Left lung (tissue), 14 donors: ENCODE measurements at regions of chr19 and their contacts with region 1.

Region 1: GRCh38 chr19:47779524-47780214 is 1.2 kb downstream of the SELENOW start:
- DNase-seq: peak in 1 of 4 donors; percentile 60
- ATAC-seq: peak; percentile 25
- H3K4me3 ChIP-seq: peak overlapping the region; percentile 74 to 92
- H3K27ac ChIP-seq: peak overlapping the region; percentile 94 to 98
- H3K4me1 ChIP-seq: peaks cover 29 to 31% of the 10 kb centered on the region in 2 donors
- H3K27me3 ChIP-seq: no peaks in the 10 kb centered on the region
- CTCF ChIP-seq: no peak

Region 2: DNA sequence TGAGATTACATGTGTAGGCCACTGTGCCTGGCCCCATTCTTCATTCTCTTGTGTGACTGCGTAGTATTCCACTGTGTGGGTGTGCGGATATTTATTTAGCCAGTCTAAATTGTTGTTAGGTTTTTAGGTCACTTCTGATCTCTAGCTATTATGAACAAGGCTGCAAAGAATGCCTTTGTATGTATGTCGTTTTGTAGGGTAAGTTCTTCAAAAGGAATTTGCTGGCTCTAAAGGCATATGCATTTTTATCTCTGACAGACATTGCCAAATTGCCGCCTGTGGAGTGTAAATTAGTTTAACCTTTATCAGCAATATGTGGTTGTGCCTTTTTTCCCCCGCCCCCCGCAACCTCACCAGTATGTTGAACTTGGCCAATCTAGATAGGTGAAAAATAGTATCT is 96.7 kb before region 1 on chr19:
- intact Hi-C with region 1: no loop called
- DNase-seq: peak in 1 of 4 donors; percentile 3
- ATAC-seq: no peak
- H3K4me3 ChIP-seq: no peak overlapping the region
- H3K27ac ChIP-seq: no peak overlapping the region
- H3K4me1 ChIP-seq: no peaks in the 10 kb centered on the region
- H3K27me3 ChIP-seq: no peaks in the 10 kb centered on the region
- CTCF ChIP-seq: no peak

Region 3: GRCh38 chr19:47713046-47714021 is 66.3 kb before region 1 on chr19 and contains the start of gene EHD2:
- intact Hi-C with region 1: loop called in 1 of 2 experiments (anchors 10 kb)
- DNase-seq: peak; percentile 72 to 91 (median 80)
- ATAC-seq: peak; percentile 97
- H3K4me3 ChIP-seq: peak within 1 kb of the TSS; percentile 58 to 59
- H3K27ac ChIP-seq: peak within 1 kb of the TSS; percentile 73 to 83
- H3K4me1 ChIP-seq: peaks cover 7 to 45% of the 10 kb centered on the region in 2 donors
- H3K27me3 ChIP-seq: peaks cover 0 to 21% of the 10 kb centered on the region in 2 donors
- CTCF ChIP-seq: peak; percentile 92 to 97
- polyA plus RNA-seq, gene EHD2: 97.3 to 141 (median 122) TPM